ENCODE measurements at regions of chr12 and their contacts with region 1.

Region 1: DNA sequence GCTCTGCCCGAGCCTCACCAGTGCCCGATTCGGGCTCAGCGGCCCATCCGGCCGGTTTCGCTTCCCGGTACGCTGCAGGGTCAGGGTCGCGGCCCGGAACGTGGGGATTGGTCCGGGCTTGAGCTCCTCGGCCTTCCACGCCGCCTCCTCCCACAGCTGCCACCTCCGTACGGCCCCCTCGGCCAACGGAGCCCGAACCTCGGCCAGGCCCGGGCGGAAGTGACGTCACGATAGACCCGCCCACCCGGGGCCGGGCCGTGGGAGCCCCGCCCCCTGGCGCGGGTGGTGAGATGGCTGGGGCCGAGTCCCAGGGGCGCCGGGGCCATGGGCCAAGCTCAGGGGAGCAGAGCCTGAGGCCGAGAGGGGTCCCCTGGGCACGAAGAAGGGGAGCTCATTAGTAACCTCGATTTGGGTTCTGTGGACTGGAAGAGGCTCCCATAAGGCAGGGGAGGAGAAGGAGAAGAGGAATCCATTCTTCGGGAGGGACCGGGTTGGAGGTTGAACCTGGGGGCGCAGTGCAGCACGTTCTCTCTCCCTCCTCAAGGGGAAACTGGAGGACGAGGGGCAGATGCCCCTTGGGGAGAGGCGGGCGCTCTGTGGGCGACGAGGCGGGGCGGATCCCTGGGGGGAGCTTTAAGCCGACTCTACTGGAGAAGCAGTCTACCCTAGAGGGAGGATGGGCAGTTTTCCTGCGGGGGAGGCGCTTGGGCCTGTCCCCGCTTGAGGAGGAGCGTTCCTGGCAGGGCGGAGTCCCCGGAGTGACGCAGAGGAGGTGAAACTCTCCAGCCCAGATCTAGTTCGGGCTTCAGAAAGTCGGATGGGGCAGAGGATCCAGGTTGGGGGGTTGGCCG is at the start of gene MLF2:
- DNase-seq: peak; percentile 99
- H3K4me3 Mint-ChIP-seq: peak within 1 kb of the TSS; percentile 95
- H3K27ac Mint-ChIP-seq: peak within 1 kb of the TSS; percentile 92
- H3K4me1 Mint-ChIP-seq: peaks cover 10% of the 10 kb centered on the region
- H3K27me3 Mint-ChIP-seq: no peaks in the 10 kb centered on the region
- CTCF ChIP-seq: no peak
- total RNA-seq, gene MLF2: 151 and 162 TPM in 2 replicates

Region 2: GRCh38 chr12:6470375-6471163 is 282.6 kb before region 1 on chr12 and contains the start of gene VAMP1:
- CTCF ChIA-PET with region 1: no interaction called
- POLR2A ChIA-PET with region 1: no interaction called
- intact Hi-C with region 1: no loop called
- DNase-seq: peak; percentile 96
- H3K4me3 Mint-ChIP-seq: peak within 1 kb of the TSS; percentile 72
- H3K27ac Mint-ChIP-seq: peak within 1 kb of the TSS; percentile 87
- H3K4me1 Mint-ChIP-seq: peaks cover 13% of the 10 kb centered on the region
- H3K27me3 Mint-ChIP-seq: no peaks in the 10 kb centered on the region
- CTCF ChIP-seq: no peak
- total RNA-seq, gene VAMP1: 2.5 and 2.9 TPM in 2 replicates

Region 3: DNA sequence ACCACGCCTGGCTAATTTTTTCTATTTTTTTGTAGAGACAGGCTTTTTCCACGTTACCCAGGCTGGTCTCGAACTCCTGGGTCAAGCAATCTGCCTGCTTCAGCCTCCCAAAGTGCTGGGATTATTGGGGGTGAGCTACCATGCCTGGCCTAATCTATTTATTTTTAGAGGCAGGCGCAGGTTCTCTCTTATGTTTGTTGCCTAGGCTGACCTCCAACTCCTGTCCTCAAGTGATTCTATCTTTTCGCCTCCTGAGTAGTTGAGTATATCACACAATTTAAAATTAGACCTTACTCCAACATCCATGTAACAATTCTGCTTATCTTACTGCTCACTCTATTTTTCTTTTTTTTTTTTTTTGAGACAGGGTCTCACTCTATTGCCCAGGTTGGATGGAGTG is 99.2 kb before region 1 on chr12:
- CTCF ChIA-PET with region 1: no interaction called
- POLR2A ChIA-PET with region 1: no interaction called
- intact Hi-C with region 1: no loop called
- DNase-seq: no peak
- H3K4me3 Mint-ChIP-seq: no peak overlapping the region
- H3K27ac Mint-ChIP-seq: no peak overlapping the region
- H3K4me1 Mint-ChIP-seq: no peaks in the 10 kb centered on the region
- H3K27me3 Mint-ChIP-seq: no peaks in the 10 kb centered on the region
- CTCF ChIP-seq: no peak

Region 4: GRCh38 chr12:6688999-6689882 is 63.9 kb before region 1 on chr12 and contains the start of gene ZNF384:
- CTCF ChIA-PET with region 1: interaction called, 14 read pairs
- POLR2A ChIA-PET with region 1: interaction called, 29 read pairs
- intact Hi-C with region 1: loop called (anchors 1 kb)
- DNase-seq: peak; percentile 99
- H3K4me3 Mint-ChIP-seq: peak within 1 kb of the TSS; percentile 98
- H3K27ac Mint-ChIP-seq: peak within 1 kb of the TSS; percentile 99
- H3K4me1 Mint-ChIP-seq: peaks cover 22% of the 10 kb centered on the region
- H3K27me3 Mint-ChIP-seq: peaks cover 3% of the 10 kb centered on the region
- CTCF ChIP-seq: no peak
- total RNA-seq, gene ZNF384: 62.8 and 70.8 TPM in 2 replicates

Region 5: GRCh38 chr12:6764011-6764828 is 11.1 kb after region 1 on chr12:
- CTCF ChIA-PET with region 1: interaction called, 174 read pairs
- POLR2A ChIA-PET with region 1: interaction called, 119 read pairs
- intact Hi-C with region 1: loop called (anchors 1 kb)
- DNase-seq: peak; percentile 99
- H3K4me3 Mint-ChIP-seq: peak overlapping the region; percentile 84
- H3K27ac Mint-ChIP-seq: peak overlapping the region; percentile 95
- H3K4me1 Mint-ChIP-seq: peaks cover 42% of the 10 kb centered on the region
- H3K27me3 Mint-ChIP-seq: no peaks in the 10 kb centered on the region
- CTCF ChIP-seq: no peak

Region 6: DNA sequence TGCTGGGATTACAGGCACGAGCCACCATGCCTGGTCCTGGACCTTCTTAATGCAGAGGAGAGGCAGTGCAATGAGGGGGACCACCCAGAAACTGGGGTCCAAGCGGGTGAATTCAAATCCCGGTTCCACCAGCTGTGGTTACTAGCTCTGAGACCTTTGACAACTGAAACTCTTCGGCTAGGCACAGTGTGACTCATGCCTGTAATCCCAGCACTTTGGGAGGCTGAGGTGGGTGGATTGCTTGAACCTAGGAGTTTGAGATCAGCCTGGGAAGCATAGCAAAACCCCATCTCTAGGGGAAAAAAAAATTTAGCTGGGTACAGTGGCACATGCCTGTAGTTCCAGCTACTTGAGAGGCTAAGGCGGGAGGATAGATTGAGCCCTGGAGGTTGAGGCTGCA is 31.1 kb after region 1 on chr12:
- CTCF ChIA-PET with region 1: interaction called, 110 read pairs
- POLR2A ChIA-PET with region 1: interaction called, 27 read pairs
- intact Hi-C with region 1: loop called (anchors 1 kb)
- DNase-seq: peak; percentile 20
- H3K4me3 Mint-ChIP-seq: no peak overlapping the region
- H3K27ac Mint-ChIP-seq: no peak overlapping the region
- H3K4me1 Mint-ChIP-seq: no peaks in the 10 kb centered on the region
- H3K27me3 Mint-ChIP-seq: no peaks in the 10 kb centered on the region
- CTCF ChIP-seq: no peak

Region 7: DNA sequence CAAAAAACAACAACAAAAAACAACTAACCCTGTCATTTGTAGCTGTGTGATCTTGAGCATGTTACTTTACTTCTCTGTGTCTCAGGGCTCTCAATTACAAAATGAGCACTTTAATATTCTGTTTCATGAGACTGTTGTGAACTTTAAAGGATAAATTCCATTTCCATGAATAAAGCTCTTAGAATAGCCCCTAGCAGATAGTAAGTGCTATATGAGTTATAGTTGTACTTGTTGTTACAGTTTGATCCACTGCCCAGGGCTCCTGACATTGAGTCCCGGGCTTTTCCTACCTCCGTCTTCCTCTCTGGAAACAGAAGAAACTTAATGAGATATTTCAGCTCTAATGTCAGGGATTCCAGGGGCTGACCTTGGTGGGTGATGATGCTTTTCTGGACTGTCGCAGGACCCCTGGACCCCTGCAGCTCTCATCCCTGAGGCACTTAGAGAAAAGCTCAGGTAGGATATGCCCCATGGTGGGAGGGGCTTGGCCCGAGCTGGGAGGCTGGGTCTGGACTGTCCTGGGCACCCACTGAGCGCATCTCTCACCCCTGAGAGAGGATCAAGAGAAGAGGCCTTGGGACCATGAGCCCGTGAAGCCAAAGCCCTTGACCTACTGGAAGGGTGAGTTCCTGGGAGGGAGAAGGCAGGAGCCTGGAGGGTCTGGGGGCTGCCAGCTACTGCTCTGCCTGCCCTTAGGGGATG is 80.2 kb after region 1 on chr12:
- CTCF ChIA-PET with region 1: interaction called, 74 read pairs
- POLR2A ChIA-PET with region 1: interaction called, 23 read pairs
- intact Hi-C with region 1: loop called (anchors 1 kb)
- DNase-seq: no peak
- H3K4me3 Mint-ChIP-seq: no peak overlapping the region
- H3K27ac Mint-ChIP-seq: no peak overlapping the region
- H3K4me1 Mint-ChIP-seq: peaks cover 7% of the 10 kb centered on the region
- H3K27me3 Mint-ChIP-seq: peaks cover 37% of the 10 kb centered on the region
- CTCF ChIP-seq: no peak

Region 8: GRCh38 chr12:6851921-6852650 is 98.9 kb after region 1 on chr12 and contains the start of gene USP5:
- CTCF ChIA-PET with region 1: interaction called, 11 read pairs
- POLR2A ChIA-PET with region 1: interaction called, 43 read pairs
- intact Hi-C with region 1: no loop called
- DNase-seq: peak; percentile 100
- H3K4me3 Mint-ChIP-seq: peak within 1 kb of the TSS; percentile 88
- H3K27ac Mint-ChIP-seq: peak within 1 kb of the TSS; percentile 90
- H3K4me1 Mint-ChIP-seq: peaks cover 31% of the 10 kb centered on the region
- H3K27me3 Mint-ChIP-seq: no peaks in the 10 kb centered on the region
- CTCF ChIP-seq: no peak
- total RNA-seq, gene USP5: 62.5 and 80.2 TPM in 2 replicates

Region 9: GRCh38 chr12:7180685-7181084 is 427.5 kb after region 1 on chr12:
- CTCF ChIA-PET with region 1: no interaction called
- POLR2A ChIA-PET with region 1: no interaction called
- intact Hi-C with region 1: no loop called
- DNase-seq: no peak
- H3K4me3 Mint-ChIP-seq: no peak overlapping the region
- H3K27ac Mint-ChIP-seq: no peak overlapping the region
- H3K4me1 Mint-ChIP-seq: peaks cover under 1% of the 10 kb centered on the region
- H3K27me3 Mint-ChIP-seq: no peaks in the 10 kb centered on the region
- CTCF ChIP-seq: no peak